Activated CD4-positive, alpha-beta T cell treated with anti-CD3 and anti-CD28 coated beads, Interleukin-2, amount 10 ng/mL, durations not matched to agents 24 days and 14 days (primary cell): ENCODE measurements at regions of chr16 and their contacts with region 1.

Region 1: DNA sequence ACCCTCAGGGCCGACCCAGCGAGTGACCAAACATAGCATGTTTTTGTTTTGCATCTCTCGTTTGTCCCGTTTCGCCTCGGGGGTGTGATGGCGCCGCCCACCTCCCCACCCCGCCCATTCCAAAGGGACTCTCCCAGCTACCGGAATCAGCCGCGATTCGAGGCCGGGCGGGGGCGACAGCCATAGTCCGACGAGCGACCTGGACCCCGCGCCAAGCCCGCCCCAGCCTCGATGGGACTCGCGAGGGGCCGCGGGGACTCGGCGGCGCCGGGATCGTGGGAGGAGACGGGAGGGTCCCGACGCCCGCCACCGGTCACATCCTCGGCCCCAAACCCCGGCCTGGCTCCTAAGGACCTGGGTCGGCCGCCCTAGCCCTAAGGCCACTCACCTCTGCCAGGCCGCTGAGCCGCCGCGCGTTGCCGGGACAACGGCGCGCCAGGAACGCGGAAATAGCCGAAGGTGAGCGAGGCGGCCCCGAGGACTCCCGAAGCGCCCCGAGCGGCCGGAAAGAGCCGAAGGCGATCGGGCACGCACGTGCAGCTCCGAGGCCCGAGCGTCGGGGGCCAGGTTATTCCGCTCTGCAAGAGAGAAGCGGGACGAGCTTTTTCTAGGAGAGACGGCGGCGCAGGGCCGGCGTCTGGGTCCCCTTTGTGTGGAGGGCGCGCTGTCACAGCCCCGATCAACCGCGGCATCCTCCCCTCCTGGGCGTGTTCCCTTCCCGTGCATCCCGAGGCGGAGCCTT is 1.4 kb downstream of the IFT140 start:
- DNase-seq: peak; percentile 98
- H3K4me3 Mint-ChIP-seq: peak overlapping the region; percentile 95
- H3K27ac Mint-ChIP-seq: peak overlapping the region; percentile 100
- H3K4me1 Mint-ChIP-seq: peaks cover 25% of the 10 kb centered on the region
- H3K27me3 Mint-ChIP-seq: no peaks in the 10 kb centered on the region

Region 2: GRCh38 chr16:1308977-1309885 is 301.2 kb before region 1 on chr16 and contains the start of gene UBE2I:
- intact Hi-C with region 1: loop called (anchors 5 kb)
- DNase-seq: peak; percentile 99
- H3K4me3 Mint-ChIP-seq: peak within 1 kb of the TSS; percentile 94
- H3K27ac Mint-ChIP-seq: peak within 1 kb of the TSS; percentile 99
- H3K4me1 Mint-ChIP-seq: peaks cover 22% of the 10 kb centered on the region
- H3K27me3 Mint-ChIP-seq: no peaks in the 10 kb centered on the region
- total RNA-seq, gene UBE2I: 269 and 278 TPM in 2 replicates

Region 3: DNA sequence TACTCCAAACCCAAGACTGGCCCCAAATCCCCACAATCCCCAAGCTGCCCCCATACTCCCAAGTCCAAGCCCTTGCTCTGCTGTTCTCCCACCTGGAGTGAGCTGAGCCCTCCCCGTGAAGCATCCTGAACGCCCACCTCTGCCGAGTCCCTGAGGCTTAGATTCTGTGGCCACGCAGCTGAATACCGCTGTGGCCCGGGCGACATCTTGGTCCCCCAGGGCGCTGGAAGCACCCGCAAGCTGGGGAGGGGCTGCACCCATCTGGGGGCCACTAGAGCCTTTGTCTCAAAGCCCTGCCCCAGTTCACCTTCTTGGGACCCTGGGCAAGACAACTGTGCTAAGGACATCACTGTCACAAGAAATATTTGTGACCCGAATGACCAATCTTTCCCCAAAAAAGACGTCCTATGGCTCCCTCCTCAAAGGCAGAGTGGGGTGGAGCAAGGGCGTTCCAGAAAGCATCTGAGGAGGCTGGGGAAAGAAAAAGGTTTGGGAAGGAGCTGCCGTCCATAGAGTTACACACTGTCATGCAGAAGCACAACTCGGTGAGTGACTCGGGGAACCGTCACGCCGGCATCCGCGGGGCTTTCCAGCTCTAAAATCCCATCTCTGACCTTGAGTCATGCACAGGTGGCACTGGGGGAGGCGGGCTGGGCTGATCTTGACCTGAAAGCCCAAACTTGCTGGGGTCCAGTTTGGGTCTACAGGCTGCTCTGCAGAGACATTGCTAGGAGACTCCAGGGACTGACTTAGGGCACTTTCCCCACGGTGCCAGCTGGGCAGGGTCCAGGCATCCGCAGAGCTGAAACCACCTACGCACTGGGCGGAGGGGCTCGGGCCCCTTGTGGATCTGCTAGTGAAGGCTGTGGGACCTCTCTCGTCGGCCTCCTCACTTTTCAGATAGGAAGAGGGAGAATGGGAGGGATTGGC is 128.3 kb before region 1 on chr16:
- intact Hi-C with region 1: no loop called
- DNase-seq: no peak
- H3K4me3 Mint-ChIP-seq: no peak overlapping the region
- H3K27ac Mint-ChIP-seq: no peak overlapping the region
- H3K4me1 Mint-ChIP-seq: no peaks in the 10 kb centered on the region
- H3K27me3 Mint-ChIP-seq: peaks cover 3% of the 10 kb centered on the region

Region 4: DNA sequence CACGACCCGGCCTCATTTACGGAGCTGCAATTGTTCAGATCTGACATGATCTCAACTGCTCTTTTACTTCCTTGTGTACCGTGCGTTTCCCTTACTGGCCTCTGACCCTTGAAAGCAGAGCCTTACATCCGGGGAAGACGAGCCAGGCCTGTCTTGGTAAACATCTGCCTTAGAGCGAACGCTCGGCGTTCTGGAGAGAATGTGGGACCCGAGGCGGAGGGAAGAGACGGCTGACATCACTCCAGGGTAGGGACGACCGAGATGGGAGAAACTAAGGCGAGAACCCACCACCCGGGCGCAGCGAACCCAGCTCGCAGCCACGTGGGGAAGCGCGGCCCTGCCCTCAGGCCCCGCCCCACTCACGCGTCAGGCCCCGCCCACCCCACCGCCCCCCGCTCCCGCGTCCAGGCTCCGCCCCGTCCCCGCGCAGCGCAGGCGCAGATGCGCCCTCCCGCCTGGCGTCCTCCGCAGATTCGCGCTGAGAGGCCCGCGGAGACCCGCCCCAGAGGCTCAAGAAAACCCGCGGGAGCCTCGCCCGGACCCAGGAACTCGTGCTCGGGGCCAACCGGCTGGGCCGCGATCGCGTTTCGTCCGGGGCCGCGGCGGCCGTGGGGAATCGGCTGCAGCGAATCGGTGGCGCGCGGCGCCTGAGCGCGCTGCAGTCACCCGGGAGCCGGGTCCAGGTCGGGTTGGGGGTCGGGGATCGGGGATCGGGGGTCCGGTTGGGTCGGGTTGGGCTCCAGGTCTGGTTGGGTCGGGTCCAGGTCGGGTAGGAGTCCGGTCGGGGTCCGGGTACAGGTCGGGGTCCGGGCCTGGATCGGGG is 117.3 kb before region 1 on chr16 and contains the start of gene TELO2:
- intact Hi-C with region 1: loop called (anchors 2 kb)
- DNase-seq: peak; percentile 97
- H3K4me3 Mint-ChIP-seq: peak within 1 kb of the TSS; percentile 88
- H3K27ac Mint-ChIP-seq: peak within 1 kb of the TSS; percentile 96
- H3K4me1 Mint-ChIP-seq: peaks cover 10% of the 10 kb centered on the region
- H3K27me3 Mint-ChIP-seq: no peaks in the 10 kb centered on the region
- total RNA-seq, gene TELO2: 91.4 and 101 TPM in 2 replicates

Region 5: DNA sequence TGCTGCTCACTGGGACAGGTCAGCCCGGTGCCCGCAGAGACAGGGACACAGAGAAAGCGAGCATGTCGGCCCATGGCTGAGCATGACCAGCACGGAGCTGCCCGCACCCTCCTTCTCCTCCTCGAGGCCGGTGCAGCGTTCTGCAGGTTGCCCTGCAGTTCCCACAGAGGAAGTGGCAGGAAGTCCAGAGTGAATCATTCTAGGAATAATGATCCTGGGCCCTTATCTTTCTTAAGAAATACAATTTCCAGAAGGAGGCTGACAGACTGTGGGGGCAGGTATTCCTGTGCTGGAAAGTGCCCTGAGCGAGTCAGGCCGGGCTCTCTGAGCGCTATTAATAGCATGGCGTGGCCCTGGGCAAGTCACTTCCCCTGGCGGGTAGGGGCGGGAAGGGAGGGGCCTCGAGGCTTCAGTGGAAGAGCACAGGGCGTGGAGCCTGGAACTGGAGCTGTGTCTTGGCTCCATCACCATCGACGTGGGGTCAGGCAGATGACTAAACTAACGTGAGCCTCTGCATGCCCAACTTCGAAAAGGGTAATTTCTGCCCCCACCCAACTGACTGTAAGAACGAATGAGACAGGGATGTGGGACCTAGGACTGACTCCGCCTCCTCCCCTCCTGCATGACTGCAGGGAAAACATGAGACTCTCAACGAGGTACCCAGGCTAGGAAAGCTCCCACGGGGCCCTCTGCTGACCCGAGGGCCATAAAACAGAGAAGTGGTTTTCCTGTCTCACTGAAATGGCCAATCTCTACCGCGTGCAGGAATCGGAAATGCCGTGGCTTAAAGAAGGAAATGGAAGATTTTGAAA is 67.2 kb before region 1 on chr16:
- intact Hi-C with region 1: loop called (anchors 2 kb)
- DNase-seq: peak; percentile 83
- H3K4me3 Mint-ChIP-seq: peak overlapping the region; percentile 70
- H3K27ac Mint-ChIP-seq: peak overlapping the region; percentile 88
- H3K4me1 Mint-ChIP-seq: peaks cover 35% of the 10 kb centered on the region
- H3K27me3 Mint-ChIP-seq: no peaks in the 10 kb centered on the region

Region 6: GRCh38 chr16:1705688-1706385 is 95.4 kb after region 1 on chr16 and contains the start of gene MAPK8IP3:
- intact Hi-C with region 1: loop called (anchors 2 kb)
- DNase-seq: peak; percentile 100
- H3K4me3 Mint-ChIP-seq: peak within 1 kb of the TSS; percentile 99
- H3K27ac Mint-ChIP-seq: peak within 1 kb of the TSS; percentile 97
- H3K4me1 Mint-ChIP-seq: peaks cover 27% of the 10 kb centered on the region
- H3K27me3 Mint-ChIP-seq: no peaks in the 10 kb centered on the region
- total RNA-seq, gene MAPK8IP3: 78.2 and 80.2 TPM in 2 replicates